ENCODE measurements at regions of chr15 and their contacts with region 1.

Region 1: GRCh38 chr15:100448492-100448891 is 80.3 kb downstream of the CERS3 start:
- DNase-seq: no peak
- H3K4me3 ChIP-seq: no peak overlapping the region
- H3K27ac ChIP-seq: no peak overlapping the region
- H3K4me1 ChIP-seq: no peaks in the 10 kb centered on the region
- CTCF ChIP-seq: no peak

Region 2: DNA sequence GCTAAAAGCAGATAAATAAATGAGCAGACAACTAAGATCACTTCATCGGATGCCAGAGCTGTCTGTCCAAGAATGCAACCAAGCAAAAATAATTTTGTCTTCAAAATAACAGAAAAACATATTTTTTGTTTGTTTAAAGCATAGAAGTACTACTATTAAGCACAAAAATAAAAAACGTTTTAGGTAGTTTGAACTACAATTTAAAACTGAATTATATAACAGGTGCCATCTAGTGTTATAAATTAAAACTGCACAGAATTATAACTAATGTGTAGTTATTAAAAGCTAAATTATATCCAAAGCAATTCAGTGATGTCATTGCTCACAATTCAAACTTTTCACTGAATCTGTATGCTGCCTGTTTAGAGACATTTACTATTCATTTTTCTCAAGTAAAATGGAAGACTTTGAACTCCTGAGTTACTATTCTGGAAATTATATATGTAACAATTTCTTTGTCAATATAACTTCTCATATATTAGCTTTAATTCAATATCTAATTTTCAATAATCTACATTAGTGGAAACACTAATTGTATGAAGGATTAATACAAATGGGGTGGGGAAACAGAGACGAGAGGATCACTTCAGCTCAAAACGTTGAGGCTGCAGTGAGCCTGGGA is 124.0 kb after region 1 on chr15:
- CTCF ChIA-PET with region 1: no interaction called
- POLR2A ChIA-PET with region 1: no interaction called
- intact Hi-C with region 1: loop called (anchors 5 kb)
- DNase-seq: peak; percentile 42
- H3K4me3 ChIP-seq: no peak overlapping the region
- H3K27ac ChIP-seq: no peak overlapping the region
- H3K4me1 ChIP-seq: no peaks in the 10 kb centered on the region
- CTCF ChIP-seq: peak; percentile 82

Region 3: DNA sequence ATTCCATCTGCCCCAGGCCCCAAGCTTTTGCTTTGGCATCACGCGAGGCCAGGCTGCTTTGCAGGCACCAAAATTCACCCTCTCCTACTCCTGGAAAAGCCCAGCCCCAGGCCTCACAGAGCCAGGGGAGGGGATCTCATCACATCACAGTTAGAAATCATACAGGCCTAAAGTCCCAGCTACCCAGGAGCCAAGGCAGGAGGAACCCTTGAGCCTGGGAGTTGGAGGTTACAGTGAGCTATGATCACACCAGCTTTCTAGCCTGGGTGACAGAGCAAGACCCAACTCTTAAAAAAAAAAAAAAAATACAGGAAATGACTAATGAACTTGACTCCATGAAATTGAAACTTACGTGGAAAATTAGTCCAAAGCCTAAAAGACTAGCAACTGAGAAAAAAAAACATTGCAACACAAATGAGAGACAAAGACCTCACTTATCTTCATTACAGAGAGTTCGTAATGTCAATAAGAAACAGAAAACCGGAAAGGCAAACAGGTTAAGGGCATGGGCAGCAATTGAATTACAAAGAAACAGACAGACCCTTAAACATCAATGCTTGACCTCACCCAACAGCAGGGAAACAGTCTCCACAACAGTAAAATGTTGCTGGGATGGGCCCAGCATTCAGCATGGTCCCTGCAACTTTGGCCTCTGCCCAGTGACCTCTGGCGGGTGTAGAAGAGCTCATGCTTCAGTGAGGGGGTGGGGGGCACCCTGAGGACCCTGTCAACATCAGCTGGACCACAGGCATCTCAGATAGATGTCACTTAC is 622.2 kb after region 1 on chr15:
- CTCF ChIA-PET with region 1: no interaction called
- POLR2A ChIA-PET with region 1: no interaction called
- intact Hi-C with region 1: loop called (anchors 10 kb)
- DNase-seq: no peak
- H3K4me3 ChIP-seq: no peak overlapping the region
- H3K27ac ChIP-seq: no peak overlapping the region
- H3K4me1 ChIP-seq: no peaks in the 10 kb centered on the region
- CTCF ChIP-seq: no peak

Measured in OCI-LY7 (cell line).